T-cell (primary cell): ENCODE measurements at regions of chr4 and their contacts with region 1.

Region 1: DNA sequence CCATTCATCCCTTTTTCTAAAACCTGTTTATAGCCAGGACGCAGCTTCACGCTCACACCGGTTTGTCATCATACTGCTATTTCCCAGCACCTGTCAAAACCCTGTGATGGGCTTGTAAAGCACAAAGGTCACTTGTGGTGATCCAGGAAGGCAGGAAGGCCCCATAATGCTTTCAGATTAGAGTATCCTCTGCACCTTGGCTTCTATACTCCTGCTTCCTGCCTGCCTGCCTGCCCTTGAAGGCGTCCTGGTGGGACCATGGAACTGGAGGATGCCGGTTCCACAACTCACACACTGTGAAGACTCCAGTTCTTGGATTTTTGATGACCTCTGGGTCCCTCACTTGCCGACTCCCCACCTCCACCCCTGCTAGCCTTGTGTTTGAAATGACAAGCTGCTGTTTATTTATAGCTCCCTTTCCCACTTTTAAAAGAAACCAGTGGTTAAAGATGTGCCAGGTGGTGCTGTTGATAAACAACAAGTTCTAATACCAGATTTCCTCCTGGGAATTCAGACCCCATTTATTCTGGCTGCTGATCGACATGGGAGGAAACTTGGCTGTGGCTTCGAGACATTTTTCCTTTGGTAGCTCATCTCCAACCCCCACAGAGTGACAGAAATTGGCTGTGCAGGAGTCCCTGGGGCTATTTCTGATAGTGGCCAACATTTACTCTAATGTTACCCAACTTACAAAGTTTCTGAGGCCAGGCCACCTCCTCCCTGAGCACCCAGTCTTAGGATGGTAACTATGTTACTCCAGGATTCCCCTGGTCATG is 211.5 kb downstream of the KDR start:
- DNase-seq: no peak
- ATAC-seq: no peak
- H3K4me3 ChIP-seq: no peak overlapping the region
- H3K4me3 Mint-ChIP-seq: no peak overlapping the region
- H3K27ac ChIP-seq: no peak overlapping the region
- H3K27ac Mint-ChIP-seq: no peak overlapping the region
- H3K4me1 ChIP-seq: peaks cover 0 to 16% of the 10 kb centered on the region in 2 experiments
- H3K4me1 Mint-ChIP-seq: peaks cover 8 to 14% (median 9%) of the 10 kb centered on the region in 3 donors
- H3K27me3 ChIP-seq: no peaks in the 10 kb centered on the region
- H3K27me3 Mint-ChIP-seq: peaks cover 0 to 2% of the 10 kb centered on the region in 2 donors

Region 2: DNA sequence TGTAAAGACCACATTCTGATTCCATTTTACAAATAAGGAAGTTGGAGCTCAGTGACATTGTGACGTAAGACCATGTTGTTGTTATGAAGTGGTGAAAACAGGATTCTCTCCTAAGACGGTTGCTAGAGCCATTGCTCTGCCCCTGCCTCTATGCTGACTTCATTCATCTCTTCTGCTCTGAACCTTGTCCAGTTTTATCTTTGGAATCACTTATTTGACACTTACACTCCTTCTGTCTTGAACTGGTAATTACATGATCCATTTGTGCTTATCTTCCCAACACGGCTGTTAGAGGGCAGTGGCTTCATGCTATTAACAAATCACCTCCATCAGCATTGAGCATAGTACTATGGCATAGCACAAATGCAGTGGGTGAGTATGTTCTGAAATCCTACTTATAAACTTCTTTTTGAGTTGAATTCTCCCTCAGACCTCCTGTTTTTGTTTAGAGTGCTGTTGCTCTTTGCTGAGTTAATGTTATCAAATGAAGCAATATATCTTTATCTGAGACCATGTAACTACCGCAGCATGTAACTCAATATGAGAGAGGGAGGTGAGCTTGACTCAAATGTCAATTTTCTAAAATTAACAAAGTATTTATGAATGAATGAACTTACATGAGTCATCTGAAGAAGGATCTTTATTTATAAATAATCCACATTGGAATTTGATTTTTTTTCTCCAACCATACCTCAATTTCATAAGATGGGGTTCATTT is 1874.0 kb before region 1 on chr4:
- CTCF ChIA-PET with region 1: no interaction called
- POLR2A ChIA-PET with region 1: no interaction called
- DNase-seq: no peak
- ATAC-seq: no peak
- H3K4me3 ChIP-seq: no peak overlapping the region
- H3K4me3 Mint-ChIP-seq: no peak overlapping the region
- H3K27ac ChIP-seq: no peak overlapping the region
- H3K27ac Mint-ChIP-seq: no peak overlapping the region
- H3K4me1 ChIP-seq: no peaks in the 10 kb centered on the region
- H3K4me1 Mint-ChIP-seq: peaks cover 0 to 7% (median 1%) of the 10 kb centered on the region in 3 donors
- H3K27me3 ChIP-seq: no peaks in the 10 kb centered on the region
- H3K27me3 Mint-ChIP-seq: no peaks in the 10 kb centered on the region

Region 3: DNA sequence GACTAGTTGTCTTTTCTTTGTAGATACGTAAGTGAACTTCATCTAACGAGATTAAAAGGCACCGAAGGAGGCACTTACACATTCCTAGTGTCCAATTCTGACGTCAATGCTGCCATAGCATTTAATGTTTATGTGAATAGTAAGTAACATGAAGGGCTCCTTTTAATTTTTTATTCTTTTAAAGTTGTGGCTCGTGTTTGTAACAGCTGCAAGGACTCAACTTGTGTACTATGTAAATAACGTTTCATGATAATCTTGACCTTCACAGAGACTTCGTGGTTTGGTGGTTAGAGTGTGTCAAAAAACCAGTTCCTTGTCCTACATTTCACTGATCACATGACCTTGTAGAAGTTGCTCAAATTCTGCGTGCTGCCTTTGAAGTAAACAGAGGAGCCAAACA is 204.5 kb before region 1 on chr4:
- CTCF ChIA-PET with region 1: interaction called in 1 of 2 experiments, 13 read pairs
- POLR2A ChIA-PET with region 1: no interaction called
- DNase-seq: peak in 3 of 35 experiments; percentile 5 to 41 (median 5)
- ATAC-seq: peak in 2 of 4 experiments; percentile 35 to 55
- H3K4me3 ChIP-seq: no peak overlapping the region
- H3K4me3 Mint-ChIP-seq: no peak overlapping the region
- H3K27ac ChIP-seq: peak overlapping the region; percentile 35
- H3K27ac Mint-ChIP-seq: peak overlapping the region; percentile 68 to 71
- H3K4me1 ChIP-seq: peaks cover 2 to 12% of the 10 kb centered on the region in 2 experiments
- H3K4me1 Mint-ChIP-seq: peaks cover 12 to 28% (median 25%) of the 10 kb centered on the region in 3 donors
- H3K27me3 ChIP-seq: peaks cover 0 to 4% of the 10 kb centered on the region in 2 experiments
- H3K27me3 Mint-ChIP-seq: peaks cover 10 to 13% of the 10 kb centered on the region in 2 donors

Region 4: DNA sequence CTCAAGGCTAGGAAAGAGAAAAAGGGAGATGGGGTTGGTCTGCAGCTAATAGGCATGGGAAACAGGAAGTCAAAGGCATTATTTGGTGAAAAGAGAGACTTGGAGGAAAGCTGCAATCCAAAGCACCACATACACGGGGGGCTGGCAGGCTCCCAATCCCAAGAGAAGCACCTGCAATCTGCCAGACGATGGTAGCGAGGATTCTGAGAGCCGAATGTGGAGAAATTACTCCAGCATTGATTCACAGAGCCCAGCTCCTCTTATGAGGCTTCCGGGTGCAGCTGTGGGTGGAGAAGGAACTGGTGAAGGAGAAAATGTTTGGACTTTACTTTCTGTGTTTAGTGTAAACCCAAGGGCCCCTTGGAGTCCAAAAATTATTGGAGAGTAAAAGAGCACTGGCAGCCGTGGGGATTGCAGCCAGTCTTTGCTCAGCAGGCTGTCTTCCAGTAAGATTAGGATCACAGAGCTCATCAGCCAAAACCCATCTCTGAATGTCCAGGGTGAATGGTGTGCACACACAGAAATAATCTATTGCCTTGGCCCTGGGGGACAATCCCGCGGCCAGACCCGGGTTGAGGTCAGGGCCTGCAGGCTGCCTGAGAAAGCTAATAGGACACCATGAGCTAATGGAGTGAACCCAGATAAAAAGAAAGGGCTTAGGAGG is 58.6 kb before region 1 on chr4:
- CTCF ChIA-PET with region 1: no interaction called
- POLR2A ChIA-PET with region 1: no interaction called
- DNase-seq: no peak
- ATAC-seq: no peak
- H3K4me3 ChIP-seq: no peak overlapping the region
- H3K4me3 Mint-ChIP-seq: no peak overlapping the region
- H3K27ac ChIP-seq: no peak overlapping the region
- H3K27ac Mint-ChIP-seq: no peak overlapping the region
- H3K4me1 ChIP-seq: no peaks in the 10 kb centered on the region
- H3K4me1 Mint-ChIP-seq: no peaks in the 10 kb centered on the region
- H3K27me3 ChIP-seq: no peaks in the 10 kb centered on the region
- H3K27me3 Mint-ChIP-seq: no peaks in the 10 kb centered on the region